ENCODE measurements at regions of chr18 and their contacts with region 1.

Region 1: DNA sequence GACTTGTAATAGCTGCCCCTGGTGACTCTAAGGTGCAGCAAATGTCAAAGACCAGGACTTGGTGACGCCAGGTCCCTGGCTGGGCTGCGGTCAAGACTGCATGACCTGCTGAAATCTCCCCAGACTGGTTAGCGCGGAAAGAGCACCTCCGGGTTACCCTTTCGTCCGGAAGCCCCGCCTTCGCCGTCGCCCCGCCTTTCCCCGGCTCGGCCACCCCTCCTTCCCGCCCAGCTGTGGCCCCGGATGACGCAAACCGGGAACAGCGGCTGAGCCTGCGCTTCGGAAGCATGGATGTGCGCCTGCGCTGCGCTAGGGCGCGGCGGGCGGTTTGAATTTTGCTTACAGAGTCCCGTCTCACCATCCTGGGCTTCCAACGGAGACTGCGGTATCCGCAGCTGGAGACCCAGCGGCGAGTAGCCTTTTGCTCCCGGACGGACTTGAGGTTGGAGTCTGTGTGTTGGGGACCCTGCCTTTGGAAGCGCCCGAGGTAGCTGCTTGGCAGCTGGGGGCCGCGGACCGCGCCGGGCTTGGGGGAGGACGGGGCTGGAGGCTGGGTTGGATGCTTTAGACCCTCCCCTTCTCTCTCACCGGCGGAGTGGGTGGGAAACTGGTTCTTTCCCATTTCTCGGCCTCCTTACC is at the start of gene SKA1:
- DNase-seq: peak; percentile 93 to 95 (median 94)
- H3K4me3 ChIP-seq: peak within 1 kb of the TSS; percentile 10 to 87 (median 57)
- H3K4me3 Mint-ChIP-seq: peak within 1 kb of the TSS; percentile 66 to 84
- H3K27ac ChIP-seq: peak within 1 kb of the TSS; percentile 60 to 84
- H3K27ac Mint-ChIP-seq: peak within 1 kb of the TSS; percentile 88 to 95 (median 92)
- H3K4me1 ChIP-seq: peaks cover 12 to 17% of the 10 kb centered on the region in 2 donors
- H3K4me1 Mint-ChIP-seq: peaks cover 12% of the 10 kb centered on the region
- H3K27me3 ChIP-seq: peaks cover 0 to 4% of the 10 kb centered on the region in 2 donors
- H3K27me3 Mint-ChIP-seq: peaks cover 0 to 7% (median 3%) of the 10 kb centered on the region in 3 donors
- CTCF ChIP-seq: no peak
- polyA plus RNA-seq, gene SKA1: 0.17 TPM in 1 of 3 donors, not detected in the others

Region 2: DNA sequence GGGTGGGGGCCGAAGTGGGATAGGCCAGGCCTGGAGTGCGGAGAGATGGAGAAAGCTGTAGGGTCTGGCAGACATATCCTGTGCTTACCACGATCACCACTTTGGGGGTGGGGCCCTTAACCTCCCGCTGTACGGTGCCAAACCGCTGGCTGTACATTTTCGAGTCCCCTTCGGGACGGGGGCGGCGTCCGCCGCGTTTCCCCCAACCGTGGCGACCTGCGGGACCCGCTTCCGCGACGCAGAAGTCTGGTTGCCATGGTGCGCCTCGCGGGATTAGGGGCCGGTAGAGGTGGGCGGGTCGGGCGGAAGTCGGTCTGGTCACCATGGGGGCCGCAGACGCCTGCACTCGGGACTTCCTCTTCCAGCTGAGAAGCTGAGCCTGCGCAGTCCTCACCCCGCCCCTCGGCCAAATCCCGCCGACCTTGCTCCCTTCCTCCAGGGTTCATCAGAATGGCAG is 108.6 kb before region 1 on chr18 and contains the start of gene CFAP53:
- intact Hi-C with region 1: loop called in 1 of 2 experiments (anchors 5 kb)
- DNase-seq: peak; percentile 82 to 90 (median 87)
- H3K4me3 ChIP-seq: peak within 1 kb of the TSS; percentile 65 to 92 (median 73)
- H3K4me3 Mint-ChIP-seq: peak within 1 kb of the TSS; percentile 85 to 94
- H3K27ac ChIP-seq: peak within 1 kb of the TSS in 1 of 2 donors; percentile 59
- H3K27ac Mint-ChIP-seq: peak within 1 kb of the TSS in 6 of 7 donors; percentile 50 to 84 (median 80)
- H3K4me1 ChIP-seq: peaks cover 18 to 29% of the 10 kb centered on the region in 2 donors
- H3K4me1 Mint-ChIP-seq: peaks cover 23% of the 10 kb centered on the region
- H3K27me3 ChIP-seq: peaks cover 0 to 2% of the 10 kb centered on the region in 2 donors
- H3K27me3 Mint-ChIP-seq: peaks cover 1 to 10% (median 7%) of the 10 kb centered on the region in 3 donors
- CTCF ChIP-seq: no peak
- polyA plus RNA-seq, gene CFAP53: 0.08 to 0.14 TPM in 2 of 3 donors, not detected in the other

Region 3: DNA sequence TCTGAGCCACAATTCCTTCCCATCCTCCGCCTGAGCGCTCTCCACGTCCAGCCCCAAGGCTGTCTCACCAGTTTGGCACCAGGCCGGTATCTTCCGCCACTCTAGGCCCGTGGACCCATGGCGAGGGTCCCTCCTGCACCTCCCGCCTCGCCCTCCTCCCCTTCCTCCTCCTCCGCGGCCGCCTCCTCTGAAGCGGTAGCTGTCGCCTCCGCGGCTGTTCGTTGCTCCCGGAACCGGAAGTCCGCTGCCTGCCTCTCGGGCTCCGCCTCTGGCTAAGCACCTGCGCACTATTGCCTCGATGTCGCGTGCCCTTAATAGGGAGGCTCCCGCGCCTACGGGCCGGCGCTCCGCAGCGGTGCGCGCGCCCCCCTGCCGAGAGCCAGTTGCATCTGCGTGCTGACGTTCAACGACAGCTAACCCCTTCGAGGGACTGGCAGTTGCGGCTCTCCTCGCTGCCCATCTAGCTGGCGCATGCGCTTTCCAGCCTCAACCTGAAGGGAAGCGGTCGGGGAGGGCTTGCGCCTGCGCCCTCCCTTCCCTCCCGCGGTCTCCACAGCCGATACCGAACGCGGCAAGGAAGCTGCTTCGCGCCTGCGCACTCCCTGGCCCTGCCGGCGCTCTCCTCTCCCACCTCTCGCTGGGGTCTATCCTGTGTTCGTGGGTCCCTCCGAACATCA is 93.4 kb before region 1 on chr18 and contains the start of gene MBD1:
- intact Hi-C with region 1: loop called (anchors 5 kb)
- DNase-seq: peak; percentile 97 to 98 (median 98)
- H3K4me3 ChIP-seq: peak within 1 kb of the TSS; percentile 78 to 92 (median 86)
- H3K4me3 Mint-ChIP-seq: peak within 1 kb of the TSS; percentile 93 to 98
- H3K27ac ChIP-seq: peak within 1 kb of the TSS; percentile 86 to 87
- H3K27ac Mint-ChIP-seq: peak within 1 kb of the TSS; percentile 93 to 98 (median 96)
- H3K4me1 ChIP-seq: peaks cover 26 to 55% of the 10 kb centered on the region in 2 donors
- H3K4me1 Mint-ChIP-seq: peaks cover 49% of the 10 kb centered on the region
- H3K27me3 ChIP-seq: no peaks in the 10 kb centered on the region
- H3K27me3 Mint-ChIP-seq: peaks cover 0 to 2% (median 0%) of the 10 kb centered on the region in 3 donors
- CTCF ChIP-seq: peak; percentile 21
- polyA plus RNA-seq, gene MBD1: 13.2 to 88.6 (median 17.4) TPM

Measured in CD14-positive monocyte (primary cell).